MCF 10A (cell line): ENCODE measurements at regions of chr19 and their contacts with region 1.

Region 1: DNA sequence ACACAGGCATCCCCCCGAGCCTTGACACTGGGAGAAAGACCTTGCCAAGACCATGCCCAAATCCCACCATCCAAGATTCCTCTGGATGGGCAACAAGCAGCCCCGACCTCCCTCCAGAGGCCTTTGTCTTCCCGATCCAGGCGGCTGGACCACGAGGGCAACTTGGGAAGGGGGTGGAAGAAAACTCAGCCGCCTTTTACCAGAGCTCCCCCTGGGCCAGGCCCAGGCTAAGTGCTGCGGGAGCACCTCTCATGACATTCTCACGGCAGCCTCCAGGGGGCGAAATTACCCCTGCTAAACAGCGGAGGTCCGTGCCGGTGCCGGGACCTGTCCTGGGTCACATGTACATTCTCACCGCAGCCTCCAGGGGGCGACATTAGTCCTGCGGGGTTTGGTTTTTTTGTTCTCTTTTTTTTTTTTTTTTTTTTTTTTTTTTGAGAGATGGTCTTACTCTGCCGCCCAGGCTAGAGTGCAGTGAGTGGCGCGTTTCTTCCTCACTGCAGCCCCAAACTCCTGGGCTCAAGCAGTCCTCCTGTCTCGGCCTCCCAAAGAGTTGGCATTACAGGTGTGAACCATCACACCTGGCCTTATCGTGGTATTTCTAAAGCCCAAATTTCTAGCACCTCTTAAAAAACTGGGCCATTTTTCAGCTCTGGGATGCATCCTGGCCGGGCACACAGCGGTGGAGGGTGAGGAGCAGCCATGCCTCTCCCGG is 2.1 kb upstream of the RSPH6A start:
- DNase-seq: peak; percentile 93
- H3K4me3 Mint-ChIP-seq: no peak overlapping the region
- H3K27ac Mint-ChIP-seq: no peak overlapping the region
- H3K4me1 Mint-ChIP-seq: no peaks in the 10 kb centered on the region
- H3K27me3 Mint-ChIP-seq: no peaks in the 10 kb centered on the region
- CTCF ChIP-seq: peak; percentile 96

Region 2: DNA sequence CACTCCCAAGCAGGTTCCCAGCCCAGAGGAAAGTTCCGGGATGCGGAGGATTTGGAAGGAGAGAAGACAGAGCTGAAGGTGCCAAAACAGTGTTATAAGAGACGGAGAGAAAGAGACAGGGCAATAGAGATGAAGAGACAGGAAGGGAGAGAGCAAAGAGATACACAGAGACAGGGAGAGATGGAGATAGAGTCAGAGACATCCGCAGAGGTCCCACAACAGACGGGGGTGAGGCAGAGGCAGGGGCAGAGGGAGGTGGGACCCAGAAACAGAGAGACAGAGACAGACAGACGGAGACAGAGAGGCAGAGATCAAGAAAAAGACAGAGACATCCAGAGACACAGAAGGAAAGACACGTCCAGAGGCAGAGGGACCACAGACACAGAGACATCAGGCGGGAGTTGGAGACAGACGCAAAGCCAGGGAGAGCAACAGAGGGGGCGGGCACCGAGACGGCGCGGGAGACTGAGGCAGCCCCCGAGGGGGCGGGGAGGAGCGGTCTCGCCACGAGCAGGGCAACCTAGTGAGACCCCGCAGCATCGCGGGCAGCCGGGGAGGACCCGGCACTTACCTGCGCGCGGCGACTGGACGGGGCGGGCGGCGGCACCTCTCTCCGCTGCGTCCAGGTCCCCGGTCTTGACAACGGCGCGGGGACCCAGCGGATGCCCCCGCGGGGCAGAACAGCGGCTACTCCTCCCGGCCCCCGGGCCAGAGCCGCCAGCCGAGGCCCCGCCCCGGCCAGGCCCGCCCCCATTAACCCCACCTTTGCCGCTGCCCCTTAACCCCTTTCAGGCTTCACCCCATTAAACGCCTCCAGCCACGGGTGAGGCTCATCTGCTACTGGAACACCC is 215.4 kb before region 1 on chr19 and contains the start of gene GPR4:
- CTCF ChIA-PET with region 1: no interaction called
- POLR2A ChIA-PET with region 1: no interaction called
- intact Hi-C with region 1: no loop called
- DNase-seq: no peak
- H3K4me3 Mint-ChIP-seq: peak within 1 kb of the TSS; percentile 4
- H3K27ac Mint-ChIP-seq: no peak within 1 kb of the TSS
- H3K4me1 Mint-ChIP-seq: peaks cover 17% of the 10 kb centered on the region
- H3K27me3 Mint-ChIP-seq: peaks cover 63% of the 10 kb centered on the region
- CTCF ChIP-seq: no peak
- total RNA-seq, gene GPR4: not detected in 2 replicates

Region 3: GRCh38 chr19:45687599-45687998 is 129.6 kb before region 1 on chr19:
- CTCF ChIA-PET with region 1: no interaction called
- POLR2A ChIA-PET with region 1: no interaction called
- intact Hi-C with region 1: no loop called
- DNase-seq: no peak
- H3K4me3 Mint-ChIP-seq: no peak overlapping the region
- H3K27ac Mint-ChIP-seq: no peak overlapping the region
- H3K4me1 Mint-ChIP-seq: peaks cover 4% of the 10 kb centered on the region
- H3K27me3 Mint-ChIP-seq: no peaks in the 10 kb centered on the region
- CTCF ChIP-seq: no peak

Region 4: DNA sequence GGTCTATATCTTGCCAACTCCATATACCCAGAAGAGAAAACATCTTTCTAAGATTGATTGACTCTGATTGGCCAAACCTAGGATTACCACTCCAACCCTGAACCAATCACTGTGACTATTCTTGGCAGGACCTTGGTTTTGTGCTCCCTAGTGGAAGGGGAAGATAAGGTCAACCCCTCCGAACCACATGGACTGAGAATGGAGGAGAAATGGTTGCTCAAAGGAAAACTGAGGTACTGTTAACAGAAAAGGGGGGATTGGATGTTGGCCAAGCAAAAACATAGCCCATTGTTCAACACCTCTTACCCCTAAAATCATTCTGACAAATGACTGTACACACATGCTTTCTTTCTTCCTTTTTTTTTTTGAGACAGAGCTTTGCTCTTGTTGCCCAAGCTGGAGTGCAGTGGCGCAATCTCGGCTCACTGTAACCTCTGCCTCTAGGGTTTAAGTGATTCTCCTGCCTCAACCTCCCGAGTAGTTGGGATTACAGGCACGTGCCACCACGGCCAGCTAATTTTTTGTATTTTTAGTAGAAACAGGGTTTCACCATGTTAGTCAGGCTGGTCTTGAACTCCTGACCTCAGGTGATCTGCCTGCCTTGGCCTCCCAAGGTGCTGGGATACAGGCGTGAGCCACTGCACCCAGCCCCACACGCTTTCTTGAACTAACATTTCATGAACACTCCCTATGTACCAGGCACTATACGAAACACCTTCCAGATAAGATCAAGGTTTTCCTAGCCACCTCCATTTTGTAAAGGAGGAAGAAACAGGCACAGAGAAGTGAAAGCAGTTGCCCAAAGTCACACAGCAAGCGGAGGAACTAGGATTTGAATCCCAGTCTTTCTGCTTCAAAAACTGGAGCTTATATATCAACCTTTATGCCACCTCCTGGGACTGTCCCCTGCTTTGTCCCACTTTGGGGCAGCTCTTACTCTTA is 77.4 kb before region 1 on chr19:
- CTCF ChIA-PET with region 1: no interaction called
- POLR2A ChIA-PET with region 1: no interaction called
- intact Hi-C with region 1: no loop called
- DNase-seq: no peak
- H3K4me3 Mint-ChIP-seq: no peak overlapping the region
- H3K27ac Mint-ChIP-seq: no peak overlapping the region
- H3K4me1 Mint-ChIP-seq: no peaks in the 10 kb centered on the region
- H3K27me3 Mint-ChIP-seq: no peaks in the 10 kb centered on the region
- CTCF ChIP-seq: no peak

Region 5: GRCh38 chr19:45834970-45835369 is 17.8 kb after region 1 on chr19:
- CTCF ChIA-PET with region 1: interaction called, 12 read pairs
- POLR2A ChIA-PET with region 1: no interaction called
- intact Hi-C with region 1: no loop called
- DNase-seq: no peak
- H3K4me3 Mint-ChIP-seq: no peak overlapping the region
- H3K27ac Mint-ChIP-seq: peak overlapping the region; percentile 84
- H3K4me1 Mint-ChIP-seq: no peaks in the 10 kb centered on the region
- H3K27me3 Mint-ChIP-seq: no peaks in the 10 kb centered on the region
- CTCF ChIP-seq: no peak

Region 6: DNA sequence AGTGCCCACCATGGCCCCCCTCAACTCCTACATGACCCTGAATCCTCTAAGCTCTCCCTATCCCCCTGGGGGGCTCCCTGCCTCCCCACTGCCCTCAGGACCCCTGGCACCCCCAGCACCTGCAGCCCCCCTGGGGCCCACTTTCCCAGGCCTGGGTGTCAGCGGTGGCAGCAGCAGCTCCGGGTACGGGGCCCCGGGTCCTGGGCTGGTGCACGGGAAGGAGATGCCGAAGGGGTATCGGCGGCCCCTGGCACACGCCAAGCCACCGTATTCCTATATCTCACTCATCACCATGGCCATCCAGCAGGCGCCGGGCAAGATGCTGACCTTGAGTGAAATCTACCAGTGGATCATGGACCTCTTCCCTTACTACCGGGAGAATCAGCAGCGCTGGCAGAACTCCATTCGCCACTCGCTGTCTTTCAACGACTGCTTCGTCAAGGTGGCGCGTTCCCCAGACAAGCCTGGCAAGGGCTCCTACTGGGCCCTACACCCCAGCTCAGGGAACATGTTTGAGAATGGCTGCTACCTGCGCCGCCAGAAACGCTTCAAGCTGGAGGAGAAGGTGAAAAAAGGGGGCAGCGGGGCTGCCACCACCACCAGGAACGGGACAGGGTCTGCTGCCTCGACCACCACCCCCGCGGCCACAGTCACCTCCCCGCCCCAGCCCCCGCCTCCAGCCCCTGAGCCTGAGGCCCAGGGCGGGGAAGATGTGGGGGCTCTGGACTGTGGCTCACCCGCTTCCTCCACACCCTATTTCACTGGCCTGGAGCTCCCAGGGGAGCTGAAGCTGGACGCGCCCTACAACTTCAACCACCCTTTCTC is 55.1 kb after region 1 on chr19:
- CTCF ChIA-PET with region 1: no interaction called
- POLR2A ChIA-PET with region 1: no interaction called
- intact Hi-C with region 1: no loop called
- DNase-seq: no peak
- H3K4me3 Mint-ChIP-seq: no peak overlapping the region
- H3K27ac Mint-ChIP-seq: no peak overlapping the region
- H3K4me1 Mint-ChIP-seq: no peaks in the 10 kb centered on the region
- H3K27me3 Mint-ChIP-seq: peaks cover 39% of the 10 kb centered on the region
- CTCF ChIP-seq: no peak